ENCODE measurements at regions of chr5 and their contacts with region 1.

Region 1: GRCh38 chr5:150000256-150000989 is at the starts of genes HMGXB3 and TIGD6:
- DNase-seq: peak; percentile 92
- H3K4me3 Mint-ChIP-seq: peak within 1 kb of the TSS; percentile 82
- H3K27ac Mint-ChIP-seq: peak within 1 kb of the TSS; percentile 95
- H3K4me1 Mint-ChIP-seq: peaks cover 43% of the 10 kb centered on the region
- H3K27me3 Mint-ChIP-seq: no peaks in the 10 kb centered on the region
- CTCF ChIP-seq: no peak
- total RNA-seq, gene HMGXB3: 66.8 and 67.8 TPM in 2 replicates
- total RNA-seq, gene TIGD6: 9.0 and 10.6 TPM in 2 replicates

Region 2: GRCh38 chr5:150036513-150036912 is 36.1 kb after region 1 on chr5:
- CTCF ChIA-PET with region 1: interaction called, 5 read pairs
- POLR2A ChIA-PET with region 1: interaction called, 21 read pairs
- intact Hi-C with region 1: loop called (anchors 1 kb)
- DNase-seq: peak; percentile 95
- H3K4me3 Mint-ChIP-seq: peak overlapping the region; percentile 9
- H3K27ac Mint-ChIP-seq: peak overlapping the region; percentile 36
- H3K4me1 Mint-ChIP-seq: peaks cover 31% of the 10 kb centered on the region
- H3K27me3 Mint-ChIP-seq: no peaks in the 10 kb centered on the region
- CTCF ChIP-seq: no peak

Region 3: DNA sequence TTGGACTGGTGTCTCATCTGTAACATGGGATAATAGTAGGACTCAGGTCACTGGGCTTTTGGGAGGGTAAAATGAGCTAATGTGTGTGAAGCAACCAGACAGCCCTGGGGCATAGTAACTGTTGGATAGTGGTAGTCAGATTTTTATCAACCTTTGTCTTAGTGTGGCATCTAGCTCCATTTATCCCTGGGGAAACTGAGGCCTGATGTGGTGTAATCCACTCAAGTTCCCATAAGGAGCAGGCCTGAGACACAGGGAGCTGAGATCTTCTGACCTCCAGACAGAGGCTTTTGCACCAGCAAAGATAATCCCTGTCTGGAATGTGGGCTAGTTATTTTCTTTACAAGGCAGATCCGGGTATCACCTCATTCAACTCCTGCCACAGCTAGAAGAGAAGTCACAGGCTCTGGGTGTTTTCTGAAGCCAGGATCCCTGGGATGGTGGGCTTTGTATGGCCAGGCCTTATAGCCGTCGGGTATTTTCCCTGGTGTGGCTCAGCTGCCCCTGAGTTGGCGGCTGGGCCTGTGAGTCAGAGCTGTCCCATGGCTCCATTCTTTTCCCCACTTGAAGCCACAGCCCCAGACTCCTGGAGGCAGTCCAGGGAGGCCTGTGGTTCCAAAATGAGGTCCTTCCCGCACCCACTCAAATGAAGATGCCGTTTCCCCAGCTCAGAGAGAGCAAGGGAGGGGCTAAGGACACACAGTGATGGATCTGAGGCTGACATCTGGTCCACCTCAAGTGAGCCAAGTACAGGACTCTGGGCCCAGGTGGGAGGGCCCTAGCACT is 112.0 kb after region 1 on chr5:
- CTCF ChIA-PET with region 1: no interaction called
- POLR2A ChIA-PET with region 1: interaction called, 10 read pairs
- intact Hi-C with region 1: loop called (anchors 2 kb)
- DNase-seq: peak; percentile 93
- H3K4me3 Mint-ChIP-seq: no peak overlapping the region
- H3K27ac Mint-ChIP-seq: peak overlapping the region; percentile 46
- H3K4me1 Mint-ChIP-seq: peaks cover 47% of the 10 kb centered on the region
- H3K27me3 Mint-ChIP-seq: no peaks in the 10 kb centered on the region
- CTCF ChIP-seq: no peak

Region 4: DNA sequence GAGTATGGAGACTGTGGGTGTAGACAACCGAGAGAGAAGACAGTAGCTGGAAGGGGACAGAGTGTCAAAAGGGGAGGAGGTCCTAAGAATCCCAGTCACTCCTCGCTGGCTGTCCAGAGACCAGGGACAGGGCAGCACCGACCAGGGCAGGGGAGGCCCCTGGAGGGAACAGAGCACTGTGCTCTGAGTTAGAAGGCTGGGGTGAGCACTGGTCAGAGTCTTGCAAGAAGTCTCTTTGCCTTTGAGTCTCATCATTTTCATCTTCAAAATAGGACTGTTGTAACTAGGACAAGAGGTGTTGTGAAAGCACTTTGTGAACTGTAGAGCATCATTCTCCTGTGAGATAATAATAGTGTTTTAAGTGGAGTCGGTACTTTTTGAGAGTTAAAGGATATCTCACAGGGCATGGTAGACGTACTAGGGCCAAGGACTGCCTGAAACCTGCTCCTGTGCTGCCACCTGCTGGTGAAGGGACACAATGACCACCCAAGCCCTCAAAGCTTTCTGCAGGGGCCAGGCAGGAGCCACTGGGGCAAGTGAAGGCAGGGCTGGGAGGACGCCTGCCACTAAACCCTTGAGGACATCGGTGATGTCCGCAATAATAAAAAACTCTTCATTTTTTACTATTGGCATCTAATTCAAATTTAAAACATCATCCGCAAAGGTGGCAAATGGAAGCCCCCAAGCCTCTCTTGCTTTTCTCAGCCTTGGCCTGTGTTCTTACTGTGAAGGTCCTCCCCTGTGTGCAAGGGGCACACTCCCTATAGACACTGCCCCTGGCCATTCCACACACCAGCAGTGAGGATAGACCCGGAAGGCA is 217.7 kb after region 1 on chr5:
- CTCF ChIA-PET with region 1: interaction called, 4 read pairs
- POLR2A ChIA-PET with region 1: no interaction called
- intact Hi-C with region 1: loop called (anchors 1 kb)
- DNase-seq: peak; percentile 93
- H3K4me3 Mint-ChIP-seq: no peak overlapping the region
- H3K27ac Mint-ChIP-seq: no peak overlapping the region
- H3K4me1 Mint-ChIP-seq: no peaks in the 10 kb centered on the region
- H3K27me3 Mint-ChIP-seq: no peaks in the 10 kb centered on the region
- CTCF ChIP-seq: peak; percentile 98

Measured in MCF 10A (cell line).